Activated CD8-positive, alpha-beta T cell treated with anti-CD3 and anti-CD28 coated beads for 36 hours (primary cell): ENCODE measurements at regions of chr9 and their contacts with region 1.

Region 1: GRCh38 chr9:133375724-133376654 is at the starts of genes STKLD1 and SURF4:
- DNase-seq: peak; percentile 96
- ATAC-seq: peak; percentile 73
- H3K4me3 Mint-ChIP-seq: peak within 1 kb of the TSS; percentile 99
- H3K27ac Mint-ChIP-seq: peak within 1 kb of the TSS; percentile 98
- H3K4me1 Mint-ChIP-seq: peaks cover 34% of the 10 kb centered on the region
- H3K27me3 Mint-ChIP-seq: no peaks in the 10 kb centered on the region
- CTCF ChIP-seq: no peak
- total RNA-seq, gene STKLD1: 0.45 to 0.52 TPM
- total RNA-seq, gene SURF4: 219 to 239 TPM

Region 2: DNA sequence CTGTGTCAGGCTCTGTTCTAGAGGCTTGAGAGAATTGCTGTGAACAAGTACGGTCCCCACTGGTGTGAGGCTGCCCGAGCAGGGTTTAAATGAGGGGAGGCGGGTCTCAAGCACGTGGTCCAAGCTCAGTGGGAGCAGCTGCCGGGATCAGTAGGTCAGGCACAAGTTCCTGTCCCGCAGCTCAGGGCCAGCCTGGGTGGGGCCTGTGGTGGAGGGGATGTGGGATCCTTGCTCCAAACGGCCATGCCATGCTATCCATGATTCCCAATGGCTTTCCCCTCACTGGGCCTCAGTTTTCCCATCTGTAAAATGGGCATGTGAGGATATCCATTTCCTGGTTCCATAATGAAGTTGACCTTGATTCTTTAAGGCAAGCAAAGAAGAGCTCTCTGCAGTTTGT is 184.0 kb before region 1 on chr9:
- CTCF ChIA-PET with region 1: no interaction called
- POLR2A ChIA-PET with region 1: no interaction called
- intact Hi-C with region 1: no loop called
- DNase-seq: no peak
- ATAC-seq: no peak
- H3K4me3 Mint-ChIP-seq: no peak overlapping the region
- H3K27ac Mint-ChIP-seq: no peak overlapping the region
- H3K4me1 Mint-ChIP-seq: no peaks in the 10 kb centered on the region
- H3K27me3 Mint-ChIP-seq: peaks cover 24% of the 10 kb centered on the region
- CTCF ChIP-seq: no peak

Region 3: GRCh38 chr9:133335878-133336811 is 39.8 kb before region 1 on chr9 and contains the start of gene SURF6:
- CTCF ChIA-PET with region 1: interaction called, 11 read pairs
- POLR2A ChIA-PET with region 1: interaction called, 872 read pairs
- intact Hi-C with region 1: no loop called
- DNase-seq: peak; percentile 95
- ATAC-seq: peak; percentile 96
- H3K4me3 Mint-ChIP-seq: peak within 1 kb of the TSS; percentile 97
- H3K27ac Mint-ChIP-seq: peak within 1 kb of the TSS; percentile 94
- H3K4me1 Mint-ChIP-seq: peaks cover 47% of the 10 kb centered on the region
- H3K27me3 Mint-ChIP-seq: no peaks in the 10 kb centered on the region
- CTCF ChIP-seq: no peak
- total RNA-seq, gene SURF6: 24.9 to 28.3 TPM

Region 4: DNA sequence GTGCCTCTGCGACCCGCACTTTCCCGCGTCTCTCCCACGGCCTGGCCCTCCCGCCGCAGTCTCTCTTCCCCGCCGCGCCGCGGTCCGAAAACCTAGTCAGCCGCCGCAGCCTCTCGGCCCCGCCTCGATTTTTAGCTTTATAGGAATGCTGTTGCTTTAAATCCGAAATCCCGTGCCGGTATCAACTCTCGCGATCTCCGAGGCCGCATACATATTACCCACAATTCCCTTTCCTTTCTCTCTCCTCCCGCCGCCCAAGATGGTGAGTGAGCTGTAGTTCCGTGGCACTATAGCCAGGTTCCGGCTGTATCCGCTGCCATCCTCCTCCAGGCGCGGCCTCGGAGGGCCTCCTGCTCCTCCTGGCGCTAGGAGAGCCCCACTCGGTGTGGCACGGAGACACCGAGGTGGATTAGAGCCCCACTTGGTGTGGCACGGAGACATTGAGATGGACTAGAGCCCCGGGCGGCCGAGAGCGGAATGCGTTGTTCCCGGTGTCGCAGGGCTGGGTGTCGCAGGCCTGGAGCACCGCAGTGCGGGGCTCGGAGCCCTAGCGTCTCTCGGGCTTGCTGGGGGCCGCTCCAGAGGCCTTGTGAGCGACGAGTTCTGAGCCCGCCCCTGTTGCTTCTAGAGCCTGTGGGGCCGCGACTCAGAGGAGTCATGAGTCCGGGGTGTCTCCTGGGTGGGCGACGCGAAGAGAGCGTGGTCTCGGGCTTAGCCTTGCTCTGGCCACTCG is 27.8 kb before region 1 on chr9 and contains the starts of genes MED22 and RPL7A:
- CTCF ChIA-PET with region 1: interaction called, 15 read pairs
- POLR2A ChIA-PET with region 1: interaction called, 872 read pairs
- intact Hi-C with region 1: loop called (anchors 2 kb)
- DNase-seq: peak; percentile 98
- ATAC-seq: peak; percentile 78
- H3K4me3 Mint-ChIP-seq: peak within 1 kb of the TSS; percentile 98
- H3K27ac Mint-ChIP-seq: peak within 1 kb of the TSS; percentile 99
- H3K4me1 Mint-ChIP-seq: peaks cover 41% of the 10 kb centered on the region
- H3K27me3 Mint-ChIP-seq: no peaks in the 10 kb centered on the region
- CTCF ChIP-seq: no peak
- total RNA-seq, gene MED22: 23.4 to 29.0 TPM
- total RNA-seq, gene RPL7A: 3,479 to 3,507 TPM

Region 5: DNA sequence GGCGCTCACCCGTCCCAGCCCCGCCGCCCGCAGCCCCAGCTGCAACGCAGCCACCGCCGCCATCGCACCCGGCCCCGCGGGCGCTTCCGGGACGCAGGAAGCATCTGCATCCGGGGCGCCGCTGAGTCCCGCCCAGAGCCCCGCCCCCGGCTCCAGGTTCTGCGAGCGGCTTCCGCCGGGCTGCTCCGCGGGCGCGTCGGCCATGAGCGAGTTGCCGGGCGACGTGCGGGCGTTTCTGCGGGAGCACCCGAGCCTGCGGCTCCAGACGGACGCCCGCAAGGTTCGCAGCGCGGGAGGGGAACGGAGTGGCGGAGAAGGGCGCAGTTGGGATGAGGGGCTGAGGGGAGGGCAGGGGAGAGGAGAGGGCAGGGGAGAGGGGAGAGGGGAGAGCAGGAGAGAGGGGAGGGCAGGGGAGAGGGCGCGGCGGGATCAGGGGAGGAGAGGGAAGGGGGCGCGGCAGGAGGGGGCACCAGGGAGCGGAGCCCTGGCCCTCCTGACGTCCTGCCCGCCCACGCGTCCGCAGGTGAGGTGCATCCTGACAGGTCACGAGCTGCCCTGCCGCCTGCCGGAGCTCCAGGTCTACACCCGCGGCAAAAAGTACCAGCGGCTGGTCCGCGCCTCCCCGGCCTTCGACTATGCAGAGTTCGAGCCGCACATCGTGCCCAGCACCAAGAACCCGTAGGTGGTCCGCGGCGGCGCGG is 19.4 kb before region 1 on chr9 and contains the starts of genes SURF1 and SURF2:
- CTCF ChIA-PET with region 1: interaction called, 38 read pairs
- POLR2A ChIA-PET with region 1: interaction called, 872 read pairs
- intact Hi-C with region 1: loop called (anchors 2 kb)
- DNase-seq: peak; percentile 95
- ATAC-seq: peak; percentile 86
- H3K4me3 Mint-ChIP-seq: peak within 1 kb of the TSS; percentile 90
- H3K27ac Mint-ChIP-seq: peak within 1 kb of the TSS; percentile 87
- H3K4me1 Mint-ChIP-seq: peaks cover 63% of the 10 kb centered on the region
- H3K27me3 Mint-ChIP-seq: no peaks in the 10 kb centered on the region
- CTCF ChIP-seq: peak; percentile 19
- total RNA-seq, gene SURF1: 22.1 to 25.3 TPM
- total RNA-seq, gene SURF2: 14.6 to 21.5 TPM

Region 6: GRCh38 chr9:133362359-133363044 is 13.5 kb before region 1 on chr9:
- CTCF ChIA-PET with region 1: interaction called, 38 read pairs
- POLR2A ChIA-PET with region 1: interaction called, 872 read pairs
- intact Hi-C with region 1: no loop called
- DNase-seq: no peak
- ATAC-seq: no peak
- H3K4me3 Mint-ChIP-seq: no peak overlapping the region
- H3K27ac Mint-ChIP-seq: no peak overlapping the region
- H3K4me1 Mint-ChIP-seq: peaks cover 51% of the 10 kb centered on the region
- H3K27me3 Mint-ChIP-seq: no peaks in the 10 kb centered on the region
- CTCF ChIP-seq: no peak

Region 7: GRCh38 chr9:133417541-133418461 is 41.8 kb after region 1 on chr9 and contains the start of gene REXO4:
- CTCF ChIA-PET with region 1: interaction called, 4 read pairs
- POLR2A ChIA-PET with region 1: interaction called, 33 read pairs
- intact Hi-C with region 1: no loop called
- DNase-seq: peak; percentile 89
- ATAC-seq: peak; percentile 78
- H3K4me3 Mint-ChIP-seq: peak within 1 kb of the TSS; percentile 93
- H3K27ac Mint-ChIP-seq: peak within 1 kb of the TSS; percentile 95
- H3K4me1 Mint-ChIP-seq: peaks cover 60% of the 10 kb centered on the region
- H3K27me3 Mint-ChIP-seq: no peaks in the 10 kb centered on the region
- CTCF ChIP-seq: no peak
- total RNA-seq, gene REXO4: 35.3 to 36.7 TPM

Region 8: DNA sequence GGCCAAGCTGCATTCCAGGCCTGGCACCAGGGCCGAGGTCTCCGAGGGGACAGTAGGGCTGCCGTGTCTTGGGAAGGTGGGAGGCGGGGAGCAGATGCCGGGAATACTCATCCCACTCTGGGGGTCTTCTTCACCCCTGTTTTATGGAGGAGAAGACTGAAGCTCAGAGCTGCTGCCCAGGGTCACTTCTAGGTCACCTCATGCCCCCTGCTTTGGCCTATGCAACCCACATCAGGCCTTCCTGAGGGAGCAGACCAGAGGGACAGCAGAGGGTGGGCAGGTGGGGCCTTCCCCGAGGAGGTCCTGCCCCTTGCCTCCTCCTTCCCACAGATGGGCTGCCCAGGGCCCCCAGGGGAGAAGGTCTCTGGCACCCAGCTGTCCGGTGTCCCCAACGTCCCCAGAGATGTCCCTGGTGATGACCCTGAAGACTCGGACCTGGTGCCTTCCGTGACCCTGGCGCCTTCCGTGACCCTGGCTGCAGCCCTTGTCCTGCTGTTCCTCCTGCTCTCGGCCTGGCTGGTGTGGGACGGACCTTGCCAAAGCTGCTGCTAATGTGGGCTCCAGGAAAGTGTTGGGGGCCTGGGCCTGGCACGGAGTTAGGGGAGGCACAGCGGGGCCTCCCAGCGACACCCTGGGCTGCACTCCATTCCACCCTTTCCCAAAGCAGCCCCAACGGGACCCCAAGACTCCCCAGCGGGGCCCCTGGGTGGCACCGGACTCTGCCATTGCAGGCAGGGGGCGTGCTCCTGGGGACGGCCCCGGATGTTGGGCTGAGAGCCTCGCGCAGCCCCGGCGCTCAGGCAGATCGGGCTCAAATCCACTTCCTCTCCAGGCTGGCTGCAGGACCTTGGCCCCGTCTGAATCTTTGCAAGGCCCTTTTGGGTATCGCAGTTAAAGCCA is 109.6 kb after region 1 on chr9:
- CTCF ChIA-PET with region 1: interaction called, 4 read pairs
- POLR2A ChIA-PET with region 1: no interaction called
- intact Hi-C with region 1: loop called (anchors 10 kb)
- DNase-seq: peak; percentile 55
- ATAC-seq: peak; percentile 77
- H3K4me3 Mint-ChIP-seq: peak overlapping the region; percentile 39
- H3K27ac Mint-ChIP-seq: peak overlapping the region; percentile 55
- H3K4me1 Mint-ChIP-seq: peaks cover 5% of the 10 kb centered on the region
- H3K27me3 Mint-ChIP-seq: no peaks in the 10 kb centered on the region
- CTCF ChIP-seq: no peak